Naive thymus-derived CD4-positive, alpha-beta T cell (primary cell): ENCODE measurements at regions of chr5 and their contacts with region 1.

Region 1: DNA sequence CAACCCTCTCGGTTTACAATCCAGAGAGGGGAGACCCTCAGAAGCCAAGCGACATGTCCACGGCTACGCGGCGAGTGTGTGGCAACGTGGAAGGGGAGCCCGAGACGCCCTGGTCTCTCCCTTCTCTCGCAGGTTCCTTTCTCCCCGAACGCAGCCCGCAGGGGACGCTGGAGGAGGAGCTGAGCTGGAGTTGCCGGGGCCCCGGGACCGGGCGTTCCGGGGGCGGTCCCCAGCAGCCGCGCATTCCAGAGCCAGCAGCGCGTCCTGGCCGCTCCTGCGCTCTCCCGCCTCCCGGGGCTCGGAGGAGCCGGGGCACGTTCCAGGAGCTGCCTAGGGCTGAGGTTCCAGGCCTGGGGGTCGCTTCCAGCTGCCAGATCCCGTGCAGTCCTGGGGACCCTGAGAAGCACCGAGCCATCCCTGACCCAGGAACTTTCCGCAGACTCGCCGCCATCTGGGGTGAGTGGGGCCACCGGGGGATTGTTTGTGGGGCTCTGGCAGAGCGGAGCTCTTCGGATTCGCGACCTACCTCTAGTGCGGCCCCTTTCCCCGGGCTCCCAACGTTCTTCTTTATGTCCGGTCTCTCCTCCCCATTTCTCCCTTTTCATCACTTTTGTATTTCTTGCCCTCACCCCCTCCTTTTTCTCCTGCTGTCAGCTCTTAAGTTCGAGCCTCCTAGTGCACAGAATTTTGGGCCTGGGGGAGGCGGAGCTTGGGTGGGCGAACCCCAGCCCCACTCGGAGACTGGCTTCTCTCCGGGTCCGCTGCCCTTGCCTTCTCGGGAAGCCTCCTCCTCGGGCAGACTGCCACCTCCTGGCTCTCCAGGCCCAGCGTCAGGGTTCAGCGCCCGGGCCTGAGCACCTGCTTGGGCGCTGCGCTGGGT is at the start of gene SMIM3:
- DNase-seq: peak; percentile 45 to 71 (median 62)
- ATAC-seq: peak; percentile 77
- H3K4me3 ChIP-seq: peak within 1 kb of the TSS; percentile 80
- H3K4me3 Mint-ChIP-seq: peak within 1 kb of the TSS; percentile 95 to 100 (median 98)
- H3K27ac ChIP-seq: peak within 1 kb of the TSS; percentile 73
- H3K27ac Mint-ChIP-seq: peak within 1 kb of the TSS; percentile 91 to 98 (median 95)
- H3K4me1 ChIP-seq: peaks cover 17 to 41% of the 10 kb centered on the region in 2 donors
- H3K4me1 Mint-ChIP-seq: peaks cover 34 to 62% (median 57%) of the 10 kb centered on the region in 7 donors
- H3K27me3 ChIP-seq: no peaks in the 10 kb centered on the region
- H3K27me3 Mint-ChIP-seq: peaks cover 0 to 5% (median 0%) of the 10 kb centered on the region in 5 donors
- total RNA-seq, gene SMIM3: 5.2 to 17.9 (median 7.9) TPM

Region 2: DNA sequence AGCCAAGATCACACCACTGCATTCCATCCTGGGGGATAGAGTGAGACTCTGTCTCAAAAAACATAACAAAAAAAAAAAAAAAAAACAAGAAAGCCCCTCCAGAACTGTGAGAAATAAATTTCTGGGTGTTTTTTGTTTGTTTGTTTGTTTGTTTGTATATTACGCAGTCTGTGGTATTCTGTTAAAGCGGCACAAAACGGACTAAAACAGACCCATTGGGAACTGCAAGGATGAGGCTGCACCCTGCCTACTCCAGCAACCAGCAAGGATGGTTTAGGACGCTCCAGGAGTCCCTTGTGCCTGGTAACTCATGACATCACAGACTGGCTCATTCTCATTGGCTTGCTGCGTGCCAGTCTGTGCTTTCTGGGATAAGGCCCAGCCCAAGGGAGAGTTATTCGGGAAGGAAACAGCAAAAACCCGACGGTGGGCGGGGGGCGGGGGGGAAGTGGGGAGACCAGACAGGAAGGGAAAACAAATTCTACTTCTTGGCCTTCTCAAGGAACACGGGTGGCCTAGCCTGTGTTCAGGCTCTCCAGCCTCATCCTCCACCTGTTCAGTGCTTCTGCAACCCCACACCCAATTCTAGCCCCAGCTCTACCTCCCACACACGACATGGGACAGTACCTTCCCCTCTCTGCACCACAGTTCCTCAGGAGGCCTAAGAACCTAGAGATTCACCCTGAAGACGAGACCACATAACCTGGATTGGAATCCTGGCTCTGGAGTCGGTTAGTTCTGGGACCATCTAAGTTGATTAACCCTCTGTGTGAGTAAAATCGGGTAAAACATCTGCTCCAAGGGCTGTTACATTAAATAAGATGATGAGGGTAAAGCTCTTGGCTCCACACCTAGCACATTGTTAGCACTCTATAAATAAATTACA is 368.9 kb before region 1 on chr5:
- CTCF ChIA-PET with region 1: no interaction called
- POLR2A ChIA-PET with region 1: interaction called, 5 read pairs
- intact Hi-C with region 1: loop called in 1 of 2 experiments (anchors 1 kb)
- DNase-seq: peak in 7 of 9 donors; percentile 27 to 48 (median 43)
- ATAC-seq: no peak
- H3K4me3 ChIP-seq: peak overlapping the region; percentile 83
- H3K4me3 Mint-ChIP-seq: peak overlapping the region; percentile 91 to 100 (median 98)
- H3K27ac ChIP-seq: peak overlapping the region; percentile 98
- H3K27ac Mint-ChIP-seq: peak overlapping the region; percentile 96 to 100 (median 100)
- H3K4me1 ChIP-seq: peaks cover 32 to 35% of the 10 kb centered on the region in 2 donors
- H3K4me1 Mint-ChIP-seq: peaks cover 24 to 52% (median 38%) of the 10 kb centered on the region in 7 donors
- H3K27me3 ChIP-seq: no peaks in the 10 kb centered on the region
- H3K27me3 Mint-ChIP-seq: no peaks in the 10 kb centered on the region

Region 3: DNA sequence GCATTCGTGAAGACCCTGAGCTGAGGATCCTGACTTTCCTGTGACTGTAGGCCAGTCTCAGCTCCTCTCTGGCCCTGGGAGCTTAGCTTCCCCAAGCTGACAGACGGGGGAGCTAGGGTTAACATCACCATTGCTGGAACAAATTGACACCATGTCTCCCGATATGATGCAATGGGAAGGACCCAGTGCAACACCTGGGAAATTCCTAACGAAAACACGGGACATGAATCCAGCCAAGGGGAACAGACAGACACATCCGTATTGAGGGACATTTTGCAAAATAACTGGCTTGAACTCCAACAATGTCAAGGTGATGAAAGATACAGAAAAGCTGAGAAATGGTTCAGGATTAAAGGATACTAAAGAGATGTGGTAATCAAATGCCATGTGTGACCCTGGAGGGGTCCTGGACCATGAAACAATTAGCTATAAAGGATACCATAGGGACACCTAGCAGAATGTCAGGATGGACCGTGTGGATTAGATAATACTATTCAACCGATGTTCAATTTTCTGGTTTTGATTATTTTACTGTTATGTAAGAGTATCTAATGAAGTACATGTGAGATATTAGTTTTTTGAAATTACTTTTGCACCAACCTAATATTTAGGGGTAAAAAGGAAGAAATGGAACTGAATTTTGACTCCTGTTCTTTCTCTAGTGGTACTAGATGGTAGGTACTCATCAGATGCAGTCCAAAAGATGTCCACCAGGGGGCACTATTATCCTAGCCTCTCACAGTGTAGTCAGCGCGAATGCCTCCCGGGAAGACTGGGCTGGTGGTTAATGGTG is 218.2 kb before region 1 on chr5:
- CTCF ChIA-PET with region 1: interaction called, 10 read pairs
- POLR2A ChIA-PET with region 1: interaction called, 3 read pairs
- intact Hi-C with region 1: loop called (anchors 1 kb)
- DNase-seq: peak; percentile 48 to 86 (median 78)
- ATAC-seq: peak; percentile 98
- H3K4me3 ChIP-seq: no peak overlapping the region
- H3K4me3 Mint-ChIP-seq: no peak overlapping the region
- H3K27ac ChIP-seq: no peak overlapping the region
- H3K27ac Mint-ChIP-seq: no peak overlapping the region
- H3K4me1 ChIP-seq: no peaks in the 10 kb centered on the region
- H3K4me1 Mint-ChIP-seq: peaks cover 0 to 3% (median 0%) of the 10 kb centered on the region in 7 donors
- H3K27me3 ChIP-seq: no peaks in the 10 kb centered on the region
- H3K27me3 Mint-ChIP-seq: peaks cover 0 to 10% (median 0%) of the 10 kb centered on the region in 5 donors

Region 4: DNA sequence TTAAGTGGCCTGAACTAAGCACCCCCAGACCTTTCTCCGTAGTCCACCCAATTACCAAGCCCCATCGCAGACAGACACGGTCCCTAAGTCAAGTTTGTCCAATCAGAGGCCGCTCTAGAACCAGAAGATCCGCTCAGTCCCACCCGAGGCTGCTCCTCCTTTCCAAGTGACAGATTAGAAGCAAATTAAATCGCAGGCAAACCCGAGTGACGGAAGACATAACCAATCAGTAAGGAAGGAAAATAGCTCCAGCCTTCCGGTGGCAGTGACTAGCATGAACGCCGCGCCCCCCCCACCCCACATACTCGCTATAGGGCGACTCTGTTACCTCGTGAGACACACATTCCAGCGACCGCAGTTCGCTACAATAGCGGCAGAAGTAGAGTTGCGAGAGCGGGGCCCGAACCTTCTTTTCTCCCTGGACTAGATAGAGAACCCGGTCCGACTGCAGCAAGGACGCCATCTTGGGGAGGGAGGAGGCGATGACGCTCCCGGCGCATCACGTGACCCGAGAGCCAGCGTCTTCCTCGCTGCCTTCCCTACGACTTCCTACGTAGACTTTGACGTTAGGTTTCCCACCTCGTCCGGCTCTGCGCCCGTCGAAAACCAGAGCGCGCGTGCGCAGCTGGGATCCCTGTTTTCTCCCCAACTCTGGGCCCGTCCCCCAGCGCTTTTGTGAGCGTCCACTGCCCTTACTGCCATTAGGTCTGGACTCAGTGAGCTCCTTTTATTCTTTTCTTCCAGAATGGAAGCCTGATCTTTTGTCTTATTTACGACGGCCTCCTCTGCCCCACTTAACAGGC is 20.0 kb before region 1 on chr5 and contains the start of gene DCTN4:
- CTCF ChIA-PET with region 1: interaction called, 13 read pairs
- POLR2A ChIA-PET with region 1: interaction called, 27 read pairs
- intact Hi-C with region 1: loop called (anchors 1 kb)
- DNase-seq: peak; percentile 84 to 96 (median 94)
- ATAC-seq: peak; percentile 95
- H3K4me3 ChIP-seq: peak within 1 kb of the TSS; percentile 86
- H3K4me3 Mint-ChIP-seq: peak within 1 kb of the TSS in 3 of 10 donors; percentile 23 to 46 (median 36)
- H3K27ac ChIP-seq: peak within 1 kb of the TSS; percentile 96
- H3K27ac Mint-ChIP-seq: peak within 1 kb of the TSS in 1 of 9 donors; percentile 62
- H3K4me1 ChIP-seq: peaks cover 5 to 16% of the 10 kb centered on the region in 2 donors
- H3K4me1 Mint-ChIP-seq: peaks cover 22 to 54% (median 36%) of the 10 kb centered on the region in 7 donors
- H3K27me3 ChIP-seq: no peaks in the 10 kb centered on the region
- H3K27me3 Mint-ChIP-seq: peaks cover 0 to 5% (median 0%) of the 10 kb centered on the region in 5 donors
- total RNA-seq, gene DCTN4: 42.4 to 88.2 (median 46.9) TPM

Region 5: GRCh38 chr5:151040211-151040747 is 261.5 kb after region 1 on chr5:
- CTCF ChIA-PET with region 1: no interaction called
- POLR2A ChIA-PET with region 1: no interaction called
- intact Hi-C with region 1: no loop called
- DNase-seq: no peak
- ATAC-seq: no peak
- H3K4me3 ChIP-seq: no peak overlapping the region
- H3K4me3 Mint-ChIP-seq: no peak overlapping the region
- H3K27ac ChIP-seq: no peak overlapping the region
- H3K27ac Mint-ChIP-seq: peak overlapping the region in 1 of 9 donors; percentile 14
- H3K4me1 ChIP-seq: no peaks in the 10 kb centered on the region
- H3K4me1 Mint-ChIP-seq: peaks cover 0 to 15% (median 0%) of the 10 kb centered on the region in 7 donors
- H3K27me3 ChIP-seq: no peaks in the 10 kb centered on the region
- H3K27me3 Mint-ChIP-seq: no peaks in the 10 kb centered on the region

Region 6: DNA sequence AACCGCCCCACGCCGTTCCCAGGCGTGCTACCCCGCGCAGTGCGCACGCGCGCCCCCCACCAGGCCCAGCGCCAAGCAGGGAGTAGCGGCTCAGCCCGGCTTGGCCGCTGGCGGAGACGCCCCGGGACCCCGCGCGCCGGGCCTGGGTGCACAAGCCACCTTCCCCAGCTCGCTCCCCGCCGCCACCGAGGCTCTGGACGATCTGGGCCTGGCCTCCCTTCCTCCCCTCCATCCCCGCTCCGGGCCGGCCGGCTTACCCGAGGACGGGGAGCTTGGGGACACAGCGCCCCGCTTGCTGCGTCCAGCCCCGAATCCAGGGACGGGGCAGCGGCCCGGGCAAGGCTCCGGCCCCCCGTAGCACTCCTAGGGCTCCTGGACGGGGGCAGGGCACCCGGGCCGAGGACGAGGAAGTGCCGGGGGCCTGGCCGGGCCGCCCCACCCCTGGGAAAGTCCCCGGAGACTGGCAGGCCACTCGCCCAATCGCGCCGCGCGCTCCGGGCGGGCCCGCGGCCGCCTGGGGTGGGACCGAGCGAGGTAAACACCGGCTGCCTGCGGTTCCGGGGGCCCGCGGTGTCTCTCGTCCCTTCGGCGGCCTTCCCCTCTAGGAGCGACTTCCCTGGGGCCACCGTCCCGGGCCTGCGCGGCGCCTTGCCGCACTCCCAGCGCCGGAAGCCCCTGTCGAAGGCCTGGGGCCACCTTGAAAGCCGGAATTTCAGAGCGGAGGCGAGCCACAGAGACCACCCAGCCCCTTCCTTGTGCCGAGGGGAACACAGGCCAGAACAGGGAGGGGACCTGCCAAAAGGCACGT is 302.1 kb after region 1 on chr5 and contains the start of gene TNIP1:
- CTCF ChIA-PET with region 1: no interaction called
- POLR2A ChIA-PET with region 1: no interaction called
- intact Hi-C with region 1: loop called in 1 of 2 experiments (anchors 5 kb)
- DNase-seq: peak; percentile 86 to 99 (median 90)
- ATAC-seq: peak; percentile 94
- H3K4me3 ChIP-seq: peak within 1 kb of the TSS; percentile 86
- H3K4me3 Mint-ChIP-seq: peak within 1 kb of the TSS; percentile 85 to 95 (median 90)
- H3K27ac ChIP-seq: peak within 1 kb of the TSS; percentile 96
- H3K27ac Mint-ChIP-seq: peak within 1 kb of the TSS; percentile 86 to 95 (median 91)
- H3K4me1 ChIP-seq: peaks cover 37 to 69% of the 10 kb centered on the region in 2 donors
- H3K4me1 Mint-ChIP-seq: peaks cover 53 to 84% (median 73%) of the 10 kb centered on the region in 7 donors
- H3K27me3 ChIP-seq: no peaks in the 10 kb centered on the region
- H3K27me3 Mint-ChIP-seq: no peaks in the 10 kb centered on the region
- total RNA-seq, gene TNIP1: 124 to 234 (median 131) TPM

Region 7: GRCh38 chr5:151093476-151093889 is 314.7 kb after region 1 on chr5:
- CTCF ChIA-PET with region 1: no interaction called
- POLR2A ChIA-PET with region 1: no interaction called
- intact Hi-C with region 1: no loop called
- DNase-seq: no peak
- ATAC-seq: peak; percentile 29
- H3K4me3 ChIP-seq: no peak overlapping the region
- H3K4me3 Mint-ChIP-seq: peak overlapping the region in 9 of 10 donors; percentile 7 to 73 (median 49)
- H3K27ac ChIP-seq: no peak overlapping the region
- H3K27ac Mint-ChIP-seq: peak overlapping the region; percentile 38 to 90 (median 84)
- H3K4me1 ChIP-seq: peaks cover 31 to 45% of the 10 kb centered on the region in 2 donors
- H3K4me1 Mint-ChIP-seq: peaks cover 43 to 80% (median 65%) of the 10 kb centered on the region in 7 donors
- H3K27me3 ChIP-seq: no peaks in the 10 kb centered on the region
- H3K27me3 Mint-ChIP-seq: no peaks in the 10 kb centered on the region

Region 8: DNA sequence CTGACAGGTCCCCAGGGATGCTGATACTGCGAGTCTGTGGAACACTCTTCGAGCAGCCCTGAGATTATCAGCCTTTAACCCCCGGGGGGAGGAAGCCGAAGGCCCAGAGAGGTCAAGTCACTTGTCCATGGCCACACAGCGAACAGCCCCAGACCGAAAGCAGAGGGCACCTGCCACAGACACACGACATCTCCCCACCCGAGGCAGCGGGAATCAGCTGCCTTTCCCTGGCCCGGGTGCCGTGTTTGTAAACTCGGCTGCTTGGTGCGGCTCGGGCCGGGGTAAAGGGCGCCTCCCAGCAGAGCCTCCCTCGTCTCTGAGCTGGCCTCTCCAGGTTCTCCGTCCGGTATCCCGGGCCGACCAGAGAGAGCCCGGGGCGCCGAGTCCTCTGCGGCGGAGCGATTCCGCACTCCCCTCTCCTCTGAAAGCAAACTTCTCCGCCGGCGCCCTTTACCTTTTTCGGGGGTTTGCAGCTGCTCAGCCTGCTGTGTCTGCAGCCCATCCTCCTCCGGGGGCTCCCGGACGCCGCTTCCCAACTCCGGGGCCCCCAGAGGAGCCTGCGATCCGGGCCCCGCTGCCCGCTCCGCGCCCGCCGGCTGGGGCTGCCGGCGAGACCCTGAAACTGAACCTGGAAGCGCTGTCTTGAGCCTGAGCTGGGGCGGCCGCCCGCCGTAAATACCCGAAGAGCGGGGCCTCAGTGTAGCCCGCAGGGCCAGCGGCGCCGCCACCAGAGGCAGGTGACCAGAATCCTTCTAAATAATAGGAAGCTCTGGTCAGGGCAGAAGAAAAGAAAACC is 444.9 kb after region 1 on chr5 and contains the start of gene CCDC69:
- CTCF ChIA-PET with region 1: no interaction called
- POLR2A ChIA-PET with region 1: no interaction called
- intact Hi-C with region 1: loop called in 1 of 2 experiments (anchors 5 kb)
- DNase-seq: peak; percentile 27 to 64 (median 47)
- ATAC-seq: peak; percentile 69
- H3K4me3 ChIP-seq: peak within 1 kb of the TSS; percentile 95
- H3K4me3 Mint-ChIP-seq: peak within 1 kb of the TSS; percentile 80 to 97 (median 92)
- H3K27ac ChIP-seq: peak within 1 kb of the TSS; percentile 93
- H3K27ac Mint-ChIP-seq: peak within 1 kb of the TSS; percentile 87 to 98 (median 98)
- H3K4me1 ChIP-seq: peaks cover 51 to 56% of the 10 kb centered on the region in 2 donors
- H3K4me1 Mint-ChIP-seq: peaks cover 48 to 67% (median 60%) of the 10 kb centered on the region in 7 donors
- H3K27me3 ChIP-seq: no peaks in the 10 kb centered on the region
- H3K27me3 Mint-ChIP-seq: no peaks in the 10 kb centered on the region
- total RNA-seq, gene CCDC69: 63.6 to 104 (median 94.1) TPM